ENCODE measurements at regions of chr1 and their contacts with region 1.

Region 1: GRCh38 chr1:40951943-40952743 is 27.4 kb upstream of the CTPS1 start:
- DNase-seq: peak; percentile 54
- H3K4me3 Mint-ChIP-seq: no peak overlapping the region
- H3K27ac Mint-ChIP-seq: no peak overlapping the region
- H3K4me1 Mint-ChIP-seq: peaks cover 14% of the 10 kb centered on the region
- H3K27me3 Mint-ChIP-seq: peaks cover 26% of the 10 kb centered on the region

Region 2: GRCh38 chr1:40877698-40878097 is 74.4 kb before region 1 on chr1:
- CTCF ChIA-PET with region 1: interaction called, 12 read pairs
- POLR2A ChIA-PET with region 1: no interaction called
- DNase-seq: no peak
- H3K4me3 Mint-ChIP-seq: no peak overlapping the region
- H3K27ac Mint-ChIP-seq: peak overlapping the region; percentile 25
- H3K4me1 Mint-ChIP-seq: peaks cover 38% of the 10 kb centered on the region
- H3K27me3 Mint-ChIP-seq: peaks cover 7% of the 10 kb centered on the region

Region 3: DNA sequence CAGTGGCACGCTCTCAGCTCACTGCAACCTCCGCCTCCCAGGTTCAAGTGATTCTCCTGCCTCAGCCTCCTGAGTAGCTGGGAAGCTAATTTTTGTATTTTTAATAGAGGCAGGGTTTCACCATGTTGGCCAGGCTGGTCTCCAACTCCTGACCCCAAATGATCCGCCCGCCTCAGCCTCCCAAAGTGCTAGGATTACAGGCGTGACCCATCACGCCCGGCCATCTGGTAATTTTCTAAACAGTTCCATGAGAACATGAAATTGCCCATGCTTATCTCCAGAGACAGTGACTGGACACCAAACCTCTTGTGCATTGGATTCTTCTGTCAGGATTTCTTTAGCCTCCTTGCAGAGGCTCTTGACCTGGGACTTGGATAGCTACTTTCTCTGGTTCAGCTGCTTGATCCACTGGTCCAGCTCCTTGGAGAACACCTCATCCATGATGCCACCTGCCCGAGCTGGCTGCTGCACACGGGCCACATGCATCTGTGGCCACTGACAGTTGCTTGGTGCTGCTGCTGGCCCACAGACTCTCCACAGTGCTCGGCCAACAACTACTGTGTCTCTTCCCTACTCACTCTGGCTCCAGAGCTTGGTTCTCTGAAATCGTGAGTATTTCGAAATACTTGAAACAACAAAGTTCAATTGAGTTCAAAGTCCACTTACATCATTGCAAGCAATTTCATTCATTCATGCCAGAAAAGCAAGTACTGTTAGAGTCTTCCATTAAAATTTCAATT is 12.7 kb before region 1 on chr1:
- CTCF ChIA-PET with region 1: interaction called, 11 read pairs
- POLR2A ChIA-PET with region 1: no interaction called
- DNase-seq: no peak
- H3K4me3 Mint-ChIP-seq: no peak overlapping the region
- H3K27ac Mint-ChIP-seq: no peak overlapping the region
- H3K4me1 Mint-ChIP-seq: no peaks in the 10 kb centered on the region
- H3K27me3 Mint-ChIP-seq: peaks cover 4% of the 10 kb centered on the region

Region 4: DNA sequence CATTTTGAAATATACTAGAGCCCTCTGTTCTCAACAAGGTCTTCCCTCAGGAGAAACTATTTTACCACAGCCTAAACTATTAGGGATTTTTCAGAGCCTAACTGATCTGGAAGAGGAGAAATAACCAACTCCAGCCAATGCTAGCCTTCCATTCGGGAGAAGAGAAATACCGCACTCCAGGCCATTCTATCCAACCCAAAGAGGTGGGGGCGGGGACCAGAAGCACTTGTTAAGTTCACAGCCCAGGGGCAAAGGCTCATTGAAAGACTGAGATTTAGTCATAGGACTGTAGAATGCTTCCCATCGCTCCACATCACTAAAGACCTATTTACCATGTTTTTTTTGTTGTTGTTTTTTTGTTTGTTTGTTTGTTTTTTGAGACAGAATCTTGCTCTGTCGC is 104.8 kb after region 1 on chr1:
- CTCF ChIA-PET with region 1: no interaction called
- POLR2A ChIA-PET with region 1: no interaction called
- DNase-seq: no peak
- H3K4me3 Mint-ChIP-seq: no peak overlapping the region
- H3K27ac Mint-ChIP-seq: no peak overlapping the region
- H3K4me1 Mint-ChIP-seq: no peaks in the 10 kb centered on the region
- H3K27me3 Mint-ChIP-seq: no peaks in the 10 kb centered on the region

Region 5: GRCh38 chr1:41086921-41087320 is 134.8 kb after region 1 on chr1:
- CTCF ChIA-PET with region 1: no interaction called
- POLR2A ChIA-PET with region 1: no interaction called
- DNase-seq: no peak
- H3K4me3 Mint-ChIP-seq: no peak overlapping the region
- H3K27ac Mint-ChIP-seq: no peak overlapping the region
- H3K4me1 Mint-ChIP-seq: no peaks in the 10 kb centered on the region
- H3K27me3 Mint-ChIP-seq: no peaks in the 10 kb centered on the region